A549 (cell line): ENCODE measurements at regions of chr1 and their contacts with region 1.

Region 1: DNA sequence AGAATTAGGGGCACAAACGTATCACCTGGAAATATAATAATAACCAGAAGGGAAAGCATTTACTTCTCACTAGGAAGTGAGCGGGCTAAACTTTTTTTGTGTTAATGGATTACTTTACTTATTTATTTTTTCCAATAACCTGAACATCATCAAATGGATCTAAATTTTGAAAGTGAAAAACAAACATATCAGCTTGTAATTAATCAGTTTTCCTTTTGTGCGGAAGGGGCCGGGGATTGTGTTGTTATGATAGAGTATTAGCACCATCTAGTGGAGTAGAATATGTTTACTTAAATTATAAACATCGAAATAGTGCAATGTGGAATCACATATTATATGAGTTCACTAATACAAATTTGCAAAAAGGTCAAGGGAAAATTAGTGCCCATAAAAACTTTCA is 9.0 kb downstream of the CFH start:
- DNase-seq: peak; percentile 30 to 36
- ATAC-seq: peak; percentile 71 to 84; a peak in 4 of 6 replicates
- H3K4me3 ChIP-seq: peak overlapping the region; percentile 21; the same call in 1 of the 3 replicates
- H3K27ac ChIP-seq: no peak overlapping the region
- H3K4me1 ChIP-seq: no peaks in the 10 kb centered on the region
- CTCF ChIP-seq: peak; percentile 85
- EP300 ChIP-seq: no peak
- POLR2A ChIP-seq: no peak
- RAD21 ChIP-seq: peak; percentile 90 to 94

Region 2: GRCh38 chr1:196148367-196148970 is 512.4 kb before region 1 on chr1:
- CTCF ChIA-PET with region 1: interaction called, 13 read pairs
- POLR2A ChIA-PET with region 1: no interaction called
- DNase-seq: peak; percentile 10 to 34
- ATAC-seq: peak in 1 of 2 experiments; percentile 78; a peak in 3 of 6 replicates
- H3K4me3 ChIP-seq: no peak overlapping the region
- H3K27ac ChIP-seq: no peak overlapping the region
- H3K4me1 ChIP-seq: no peaks in the 10 kb centered on the region
- CTCF ChIP-seq: peak; percentile 68
- EP300 ChIP-seq: no peak
- POLR2A ChIP-seq: no peak
- RAD21 ChIP-seq: peak; percentile 75 to 91

Region 3: DNA sequence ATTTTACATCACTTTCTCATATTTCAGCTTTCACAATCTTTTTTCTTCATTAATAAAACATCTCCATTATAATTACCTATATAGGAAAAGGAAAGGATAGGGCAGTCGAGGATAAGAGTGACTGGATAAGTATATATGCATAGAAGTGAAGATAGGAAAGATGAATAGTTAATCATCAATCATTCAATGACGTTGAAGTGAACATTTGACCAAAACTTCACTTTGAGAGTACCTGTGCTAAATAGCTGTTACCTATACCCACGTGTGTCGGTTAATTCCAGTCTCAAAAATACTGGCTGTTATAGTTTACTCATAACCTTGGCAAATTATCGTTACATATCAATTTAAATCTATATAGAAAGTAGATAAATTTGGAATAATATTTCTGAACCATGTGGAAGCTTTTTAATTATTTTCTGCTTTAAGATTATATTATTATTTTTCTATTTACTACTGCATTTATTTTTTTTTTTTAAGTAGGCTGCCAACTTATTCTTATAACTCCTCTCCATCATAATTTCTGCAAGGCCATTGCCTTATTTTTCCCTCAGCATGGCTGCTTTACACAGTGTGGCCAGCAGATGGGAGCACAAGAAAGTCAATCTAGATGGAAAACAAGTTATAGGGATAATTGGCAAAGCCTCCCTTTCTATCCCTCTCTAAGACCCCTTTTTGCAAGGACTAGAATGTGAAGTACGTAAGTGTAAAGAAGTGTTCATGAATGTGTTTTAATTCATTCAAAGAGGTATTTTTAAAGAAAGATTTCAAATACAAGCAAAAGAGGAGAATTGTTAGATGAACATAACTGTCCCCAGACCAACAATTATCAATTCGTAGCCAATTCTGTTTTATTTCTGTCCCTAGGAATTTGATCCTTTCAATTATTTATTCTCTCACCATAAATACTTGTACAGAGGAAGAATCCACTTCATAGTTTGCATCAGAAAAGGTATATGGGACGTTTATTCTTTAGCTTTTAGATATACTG is 343.0 kb before region 1 on chr1:
- CTCF ChIA-PET with region 1: interaction called, 11 read pairs
- POLR2A ChIA-PET with region 1: no interaction called
- DNase-seq: peak; percentile 0 to 58
- ATAC-seq: peak in 1 of 2 experiments; percentile 78; a peak in 4 of 6 replicates
- H3K4me3 ChIP-seq: no peak overlapping the region
- H3K27ac ChIP-seq: no peak overlapping the region
- H3K4me1 ChIP-seq: no peaks in the 10 kb centered on the region
- CTCF ChIP-seq: peak; percentile 71
- EP300 ChIP-seq: no peak
- POLR2A ChIP-seq: no peak
- RAD21 ChIP-seq: peak; percentile 68 to 80

Region 4: DNA sequence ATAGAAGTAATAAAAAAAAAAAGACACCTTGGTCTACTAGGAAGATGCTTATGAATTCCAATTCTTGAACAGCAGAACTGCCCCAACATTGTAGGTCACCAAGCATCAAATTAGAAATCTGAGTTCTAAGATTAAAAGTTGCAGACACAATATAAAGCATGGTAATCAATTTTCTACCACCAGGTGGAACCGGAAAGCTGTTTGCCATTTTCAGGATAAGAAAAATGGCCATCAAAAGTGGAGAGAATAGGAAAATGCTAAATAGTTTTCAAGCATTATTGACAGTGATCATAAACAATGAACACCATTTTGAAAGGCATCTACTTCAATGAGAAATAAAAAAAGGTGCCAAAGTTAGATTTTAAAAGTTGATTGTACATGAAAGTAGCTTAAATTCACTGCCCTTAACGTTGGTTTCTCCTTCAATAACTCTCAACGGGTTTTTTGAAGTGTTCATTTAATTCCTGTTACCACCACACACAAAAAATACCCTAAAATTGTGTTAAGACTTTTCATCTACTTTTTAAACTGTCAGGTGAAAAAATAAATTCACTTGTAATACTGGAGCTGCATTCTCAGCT is 305.6 kb before region 1 on chr1:
- CTCF ChIA-PET with region 1: interaction called, 20 read pairs
- POLR2A ChIA-PET with region 1: no interaction called
- DNase-seq: peak; percentile 5 to 33
- ATAC-seq: peak in 1 of 2 experiments; percentile 64; a peak in 2 of 6 replicates
- H3K4me3 ChIP-seq: no peak overlapping the region
- H3K27ac ChIP-seq: no peak overlapping the region
- H3K4me1 ChIP-seq: no peaks in the 10 kb centered on the region
- CTCF ChIP-seq: peak; percentile 58
- EP300 ChIP-seq: no peak
- POLR2A ChIP-seq: no peak
- RAD21 ChIP-seq: peak; percentile 63 to 69

Region 5: DNA sequence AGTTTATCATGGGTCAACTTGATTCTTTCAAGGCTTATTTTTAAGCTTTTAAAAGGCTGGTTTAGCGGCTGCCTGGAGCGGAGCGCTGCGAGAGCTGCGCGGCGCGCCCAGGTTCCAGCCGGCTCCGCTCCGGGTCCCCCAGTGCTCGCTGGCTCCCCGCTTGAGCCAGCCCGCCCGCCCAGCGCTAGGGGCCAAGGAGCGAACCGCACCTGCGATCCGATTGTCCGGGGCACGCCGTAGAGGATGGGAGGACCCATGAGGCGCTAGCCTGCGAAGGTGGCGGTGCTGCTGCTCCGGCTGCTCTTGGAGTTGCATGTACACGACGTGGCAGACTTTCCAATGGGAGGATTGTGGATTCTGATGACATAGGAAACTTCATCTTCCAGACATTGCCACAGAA is 217.1 kb after region 1 on chr1:
- CTCF ChIA-PET with region 1: no interaction called
- POLR2A ChIA-PET with region 1: no interaction called
- DNase-seq: peak; percentile 3 to 33
- ATAC-seq: peak; percentile 94
- H3K4me3 ChIP-seq: peak overlapping the region; percentile 39
- H3K27ac ChIP-seq: no peak overlapping the region
- H3K4me1 ChIP-seq: no peaks in the 10 kb centered on the region
- CTCF ChIP-seq: no peak
- EP300 ChIP-seq: no peak
- POLR2A ChIP-seq: no peak
- RAD21 ChIP-seq: no peak